ENCODE measurements at regions of chr11 and their contacts with region 1.

Region 1: GRCh38 chr11:72939031-72939430 is 124.8 kb downstream of the ATG16L2 start:
- DNase-seq: no peak
- H3K4me3 ChIP-seq: no peak overlapping the region
- H3K27ac ChIP-seq: no peak overlapping the region
- H3K4me1 ChIP-seq: peaks cover 4% of the 10 kb centered on the region
- CTCF ChIP-seq: no peak

Region 2: DNA sequence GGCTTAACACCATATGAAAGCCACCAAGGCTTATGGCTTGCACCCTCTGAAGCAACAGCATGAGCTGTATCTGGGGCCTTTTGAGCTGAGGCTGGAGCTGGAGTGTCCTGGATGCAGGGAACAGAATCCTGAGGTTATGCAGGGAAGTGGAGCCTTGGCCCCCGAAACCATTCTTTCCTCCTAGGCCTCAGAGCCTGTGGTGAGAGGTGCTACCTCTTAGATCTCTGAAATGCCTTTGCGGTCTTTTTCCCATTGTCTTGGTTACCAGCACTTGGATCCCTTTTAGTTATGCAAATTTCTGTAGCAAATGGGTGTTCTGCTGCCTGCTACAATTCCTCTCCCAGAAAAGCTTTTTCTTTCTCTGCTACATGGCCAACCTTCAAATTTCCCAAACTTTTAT is 432.0 kb before region 1 on chr11:
- CTCF ChIA-PET with region 1: no interaction called
- POLR2A ChIA-PET with region 1: no interaction called
- intact Hi-C with region 1: no loop called
- DNase-seq: no peak
- H3K4me3 ChIP-seq: no peak overlapping the region
- H3K27ac ChIP-seq: no peak overlapping the region
- H3K4me1 ChIP-seq: no peaks in the 10 kb centered on the region
- CTCF ChIP-seq: no peak

Region 3: GRCh38 chr11:72683782-72684200 is 255.2 kb before region 1 on chr11:
- CTCF ChIA-PET with region 1: no interaction called
- POLR2A ChIA-PET with region 1: no interaction called
- intact Hi-C with region 1: no loop called
- DNase-seq: peak; percentile 68
- H3K4me3 ChIP-seq: no peak overlapping the region
- H3K27ac ChIP-seq: no peak overlapping the region
- H3K4me1 ChIP-seq: no peaks in the 10 kb centered on the region
- CTCF ChIP-seq: peak; percentile 88

Region 4: DNA sequence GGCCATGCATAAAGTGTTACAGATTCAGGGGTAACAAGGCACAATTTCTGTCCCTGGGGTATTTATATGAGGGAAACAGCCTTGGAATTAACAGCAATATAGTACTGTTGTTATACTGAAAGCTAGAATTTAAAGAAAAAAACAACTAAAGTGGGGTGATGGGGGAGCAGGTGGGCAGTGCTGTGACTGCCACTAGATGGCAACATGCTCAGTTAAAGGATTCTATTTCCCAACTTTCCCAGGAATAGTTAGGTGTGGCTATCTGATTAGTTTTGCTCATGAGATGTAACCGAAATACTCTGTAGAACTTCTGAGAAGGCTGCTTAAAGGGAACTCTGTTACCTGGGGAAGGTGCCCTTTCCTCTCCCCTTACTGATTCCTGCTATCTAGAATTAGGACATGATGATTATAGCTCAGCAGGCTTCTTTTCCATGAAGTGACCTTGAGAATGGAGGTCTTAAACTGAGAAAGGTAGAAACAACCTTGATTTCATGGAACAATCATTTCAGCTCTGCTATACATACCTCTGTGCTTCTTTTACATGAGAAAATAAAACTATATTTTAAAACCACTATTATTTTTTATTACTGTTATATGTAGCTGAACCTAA is 539.8 kb after region 1 on chr11:
- CTCF ChIA-PET with region 1: no interaction called
- POLR2A ChIA-PET with region 1: interaction called, 10 read pairs
- intact Hi-C with region 1: no loop called
- DNase-seq: peak; percentile 21
- H3K4me3 ChIP-seq: no peak overlapping the region
- H3K27ac ChIP-seq: no peak overlapping the region
- H3K4me1 ChIP-seq: no peaks in the 10 kb centered on the region
- CTCF ChIP-seq: peak; percentile 94